B cell (primary cell): ENCODE measurements at regions of chr15 and their contacts with region 1.

Region 1: DNA sequence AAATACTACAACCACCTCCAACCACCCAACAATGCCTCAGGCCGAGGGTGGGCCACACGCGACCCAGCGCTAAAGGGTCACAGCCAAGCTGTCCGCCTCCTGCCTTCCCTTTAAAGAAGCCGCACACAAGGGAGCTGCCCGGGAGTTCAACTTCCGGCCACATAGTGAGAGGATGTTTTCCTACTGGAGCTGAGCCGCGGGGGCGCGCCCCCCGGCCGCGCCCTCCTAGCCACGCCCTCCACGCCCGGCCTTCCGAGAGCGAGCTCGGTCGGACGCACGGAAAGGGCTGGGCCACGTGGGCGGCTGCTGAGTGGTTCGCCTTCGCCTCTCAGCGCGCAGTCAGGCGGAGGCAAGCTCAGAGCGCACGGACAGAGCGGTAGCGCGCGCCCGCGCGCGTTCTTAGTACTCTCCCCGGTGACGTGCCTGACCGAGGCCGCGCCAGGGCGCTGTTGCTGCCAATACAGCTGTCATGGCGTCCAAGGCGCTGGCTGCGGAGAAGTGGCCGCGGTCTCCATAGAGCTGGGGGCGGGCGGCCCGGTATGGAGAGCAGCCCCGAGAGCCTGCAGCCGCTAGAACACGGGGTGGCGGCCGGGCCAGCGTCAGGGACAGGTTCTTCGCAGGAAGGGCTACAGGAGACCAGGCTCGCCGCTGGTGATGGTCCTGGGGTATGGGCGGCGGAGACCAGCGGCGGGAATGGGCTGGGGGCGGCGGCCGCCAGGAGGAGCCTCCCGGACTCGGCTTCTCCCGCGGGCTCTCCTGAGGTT is at the start of gene MINDY2:
- DNase-seq: peak; percentile 97
- ATAC-seq: peak; percentile 95
- H3K4me3 ChIP-seq: peak within 1 kb of the TSS; percentile 80 to 99 (median 94)
- H3K4me3 Mint-ChIP-seq: peak within 1 kb of the TSS; percentile 90
- H3K27ac ChIP-seq: peak within 1 kb of the TSS; percentile 86 to 87
- H3K27ac Mint-ChIP-seq: peak within 1 kb of the TSS; percentile 96
- H3K4me1 ChIP-seq: peaks cover 28 to 32% of the 10 kb centered on the region in 2 donors
- H3K4me1 Mint-ChIP-seq: peaks cover 19% of the 10 kb centered on the region
- H3K27me3 ChIP-seq: no peaks in the 10 kb centered on the region
- H3K27me3 Mint-ChIP-seq: no peaks in the 10 kb centered on the region
- CTCF ChIP-seq: peak; percentile 46
- total RNA-seq, gene MINDY2: 16.6 and 17.0 TPM in 2 replicates

Region 2: GRCh38 chr15:58677426-58677825 is 93.6 kb before region 1 on chr15:
- CTCF ChIA-PET with region 1: interaction called, 12 read pairs
- POLR2A ChIA-PET with region 1: no interaction called
- intact Hi-C with region 1: no loop called
- DNase-seq: no peak
- ATAC-seq: no peak
- H3K4me3 ChIP-seq: no peak overlapping the region
- H3K4me3 Mint-ChIP-seq: no peak overlapping the region
- H3K27ac ChIP-seq: no peak overlapping the region
- H3K27ac Mint-ChIP-seq: no peak overlapping the region
- H3K4me1 ChIP-seq: no peaks in the 10 kb centered on the region
- H3K4me1 Mint-ChIP-seq: peaks cover 4% of the 10 kb centered on the region
- H3K27me3 ChIP-seq: no peaks in the 10 kb centered on the region
- H3K27me3 Mint-ChIP-seq: no peaks in the 10 kb centered on the region
- CTCF ChIP-seq: peak; percentile 20

Region 3: GRCh38 chr15:58715266-58715917 is 55.6 kb before region 1 on chr15:
- CTCF ChIA-PET with region 1: no interaction called
- POLR2A ChIA-PET with region 1: no interaction called
- intact Hi-C with region 1: loop called (anchors 2 kb)
- DNase-seq: peak; percentile 45
- ATAC-seq: peak; percentile 61
- H3K4me3 ChIP-seq: no peak overlapping the region
- H3K4me3 Mint-ChIP-seq: no peak overlapping the region
- H3K27ac ChIP-seq: no peak overlapping the region
- H3K27ac Mint-ChIP-seq: peak overlapping the region; percentile 8
- H3K4me1 ChIP-seq: peaks cover 13 to 15% of the 10 kb centered on the region in 2 donors
- H3K4me1 Mint-ChIP-seq: peaks cover 24% of the 10 kb centered on the region
- H3K27me3 ChIP-seq: no peaks in the 10 kb centered on the region
- H3K27me3 Mint-ChIP-seq: no peaks in the 10 kb centered on the region
- CTCF ChIP-seq: no peak

Region 4: GRCh38 chr15:58749532-58750337 is 21.3 kb before region 1 on chr15 and contains the start of gene ADAM10:
- CTCF ChIA-PET with region 1: interaction called, 28 read pairs
- POLR2A ChIA-PET with region 1: interaction called, 55 read pairs
- intact Hi-C with region 1: loop called (anchors 1 kb)
- DNase-seq: peak; percentile 97
- ATAC-seq: peak; percentile 88
- H3K4me3 ChIP-seq: peak within 1 kb of the TSS; percentile 88 to 99 (median 99)
- H3K4me3 Mint-ChIP-seq: peak within 1 kb of the TSS; percentile 99
- H3K27ac ChIP-seq: peak within 1 kb of the TSS; percentile 86 to 92
- H3K27ac Mint-ChIP-seq: peak within 1 kb of the TSS; percentile 97
- H3K4me1 ChIP-seq: peaks cover 12 to 27% of the 10 kb centered on the region in 2 donors
- H3K4me1 Mint-ChIP-seq: peaks cover 35% of the 10 kb centered on the region
- H3K27me3 ChIP-seq: no peaks in the 10 kb centered on the region
- H3K27me3 Mint-ChIP-seq: no peaks in the 10 kb centered on the region
- CTCF ChIP-seq: no peak
- total RNA-seq, gene ADAM10: 138 and 143 TPM in 2 replicates

Region 5: DNA sequence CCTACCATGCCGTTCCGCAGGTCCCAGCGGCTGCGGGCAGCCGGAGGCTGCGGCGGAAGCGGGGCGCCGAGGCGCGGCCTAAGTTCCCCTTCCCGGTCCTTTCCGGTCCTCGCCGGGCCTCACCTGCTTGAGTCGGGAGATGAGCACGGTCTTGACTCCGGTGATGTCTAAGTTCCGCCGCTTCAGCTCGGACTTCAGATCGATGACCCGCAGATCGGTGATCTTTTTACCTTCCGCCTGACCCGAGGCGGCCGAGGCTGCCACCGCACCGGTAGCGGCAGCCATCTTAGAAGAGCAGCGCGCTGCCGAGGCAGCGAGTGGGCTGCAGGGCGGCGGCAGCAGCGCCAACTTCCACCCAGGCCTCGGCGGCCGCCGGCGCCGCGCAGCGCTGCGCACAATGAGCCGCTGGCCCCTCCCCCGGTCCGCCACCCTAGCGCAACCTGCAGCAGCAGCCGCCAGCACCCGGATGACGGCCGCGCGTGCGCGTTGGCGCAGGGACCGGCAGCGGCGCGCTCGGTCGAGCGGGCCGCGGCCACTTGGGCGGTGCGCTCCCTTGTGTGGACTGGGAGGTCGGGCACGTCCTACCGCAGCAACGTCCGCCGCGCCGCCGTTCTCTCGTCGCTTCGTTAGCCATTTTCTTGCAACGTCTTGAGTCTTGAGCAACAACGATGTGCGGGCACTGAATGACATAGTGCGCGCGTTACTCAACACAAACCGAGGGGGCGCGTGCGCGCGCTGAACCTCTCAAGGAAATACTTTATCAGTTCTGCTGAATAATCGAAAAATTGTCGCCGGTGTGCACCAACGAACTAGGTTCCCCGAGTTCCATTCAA is 162.5 kb after region 1 on chr15 and contains the start of gene SLTM:
- CTCF ChIA-PET with region 1: interaction called, 3 read pairs
- POLR2A ChIA-PET with region 1: no interaction called
- intact Hi-C with region 1: loop called (anchors 1 kb)
- DNase-seq: peak; percentile 98
- ATAC-seq: peak; percentile 91
- H3K4me3 ChIP-seq: peak within 1 kb of the TSS; percentile 80 to 97 (median 90)
- H3K4me3 Mint-ChIP-seq: peak within 1 kb of the TSS; percentile 95
- H3K27ac ChIP-seq: peak within 1 kb of the TSS; percentile 97 to 98
- H3K27ac Mint-ChIP-seq: peak within 1 kb of the TSS; percentile 97
- H3K4me1 ChIP-seq: peaks cover 19 to 20% of the 10 kb centered on the region in 2 donors
- H3K4me1 Mint-ChIP-seq: peaks cover 29% of the 10 kb centered on the region
- H3K27me3 ChIP-seq: no peaks in the 10 kb centered on the region
- H3K27me3 Mint-ChIP-seq: no peaks in the 10 kb centered on the region
- CTCF ChIP-seq: peak; percentile 42
- total RNA-seq, gene SLTM: 183 and 188 TPM in 2 replicates

Region 6: DNA sequence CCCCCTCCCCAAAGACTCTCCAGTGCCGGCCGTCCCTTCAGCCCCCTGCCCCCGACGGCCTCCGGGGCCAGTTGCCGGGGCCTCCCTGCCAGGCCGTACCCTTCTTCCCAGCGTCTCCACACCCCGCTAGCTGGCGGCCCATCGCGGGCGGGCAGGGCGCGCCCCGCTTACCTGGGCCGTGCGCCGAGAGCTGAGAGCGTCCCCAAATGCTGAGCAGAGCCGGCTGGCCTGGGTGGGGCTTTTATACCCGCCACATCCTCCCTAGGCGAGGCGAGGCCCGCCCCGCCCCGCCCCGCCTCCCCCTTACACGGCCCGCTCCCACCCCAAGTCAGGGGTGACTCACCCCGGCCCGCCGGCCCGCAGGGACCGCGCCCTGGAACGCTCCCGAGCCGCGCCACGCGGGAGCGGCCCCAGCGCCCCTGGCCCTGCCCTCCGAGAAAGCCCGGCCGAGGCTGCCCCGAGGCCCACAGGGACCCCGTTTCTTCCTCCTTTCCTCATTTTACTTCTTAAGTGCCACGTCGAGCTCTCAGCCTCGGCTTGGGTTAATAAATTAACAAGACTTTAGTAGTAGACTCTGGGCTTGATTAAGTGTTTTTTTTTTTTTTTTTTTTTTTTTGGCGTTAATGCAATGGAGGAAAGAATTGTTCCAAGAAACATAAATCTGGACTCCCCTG is 1626.9 kb after region 1 on chr15 and contains the start of gene ANXA2:
- CTCF ChIA-PET with region 1: no interaction called
- POLR2A ChIA-PET with region 1: no interaction called
- intact Hi-C with region 1: loop called (anchors 10 kb)
- DNase-seq: peak; percentile 83
- ATAC-seq: peak; percentile 79
- H3K4me3 ChIP-seq: peak within 1 kb of the TSS; percentile 42 to 82 (median 72)
- H3K4me3 Mint-ChIP-seq: peak within 1 kb of the TSS; percentile 96
- H3K27ac ChIP-seq: peak within 1 kb of the TSS; percentile 44 to 60
- H3K27ac Mint-ChIP-seq: peak within 1 kb of the TSS; percentile 97
- H3K4me1 ChIP-seq: peaks cover 12 to 21% of the 10 kb centered on the region in 2 donors
- H3K4me1 Mint-ChIP-seq: peaks cover 40% of the 10 kb centered on the region
- H3K27me3 ChIP-seq: no peaks in the 10 kb centered on the region
- H3K27me3 Mint-ChIP-seq: no peaks in the 10 kb centered on the region
- CTCF ChIP-seq: no peak
- total RNA-seq, gene ANXA2: 122 and 133 TPM in 2 replicates